ENCODE measurements at regions of chr17 and their contacts with region 1.

Region 1: GRCh38 chr17:75173526-75173925 is 9.2 kb downstream of the SUMO2 start:
- DNase-seq: no peak
- ATAC-seq: no peak
- H3K4me3 ChIP-seq: no peak overlapping the region
- H3K27ac ChIP-seq: no peak overlapping the region
- H3K4me1 ChIP-seq: no peaks in the 10 kb centered on the region
- H3K27me3 ChIP-seq: no peaks in the 10 kb centered on the region
- CTCF ChIP-seq: no peak
- EP300 ChIP-seq: no peak
- POLR2A ChIP-seq: no peak
- RAD21 ChIP-seq: no peak

Region 2: GRCh38 chr17:75059369-75060345 is 113.9 kb before region 1 on chr17:
- CTCF ChIA-PET with region 1: interaction called, 10 read pairs
- POLR2A ChIA-PET with region 1: no interaction called
- RAD21 ChIA-PET with region 1: interaction called, 7 read pairs
- SMC1A ChIA-PET with region 1: interaction called, 3 read pairs
- in situ Hi-C with region 1: no loop called
- intact Hi-C with region 1: no loop called
- DNase-seq: no peak
- ATAC-seq: no peak
- H3K4me3 ChIP-seq: no peak overlapping the region
- H3K27ac ChIP-seq: no peak overlapping the region
- H3K4me1 ChIP-seq: no peaks in the 10 kb centered on the region
- H3K27me3 ChIP-seq: no peaks in the 10 kb centered on the region
- CTCF ChIP-seq: peak in 2 of 3 experiments; percentile 19 to 34; a peak in 2 of 6 replicates
- EP300 ChIP-seq: no peak
- POLR2A ChIP-seq: no peak
- RAD21 ChIP-seq: peak; percentile 38; the same call in 1 of the 2 replicates

Region 3: DNA sequence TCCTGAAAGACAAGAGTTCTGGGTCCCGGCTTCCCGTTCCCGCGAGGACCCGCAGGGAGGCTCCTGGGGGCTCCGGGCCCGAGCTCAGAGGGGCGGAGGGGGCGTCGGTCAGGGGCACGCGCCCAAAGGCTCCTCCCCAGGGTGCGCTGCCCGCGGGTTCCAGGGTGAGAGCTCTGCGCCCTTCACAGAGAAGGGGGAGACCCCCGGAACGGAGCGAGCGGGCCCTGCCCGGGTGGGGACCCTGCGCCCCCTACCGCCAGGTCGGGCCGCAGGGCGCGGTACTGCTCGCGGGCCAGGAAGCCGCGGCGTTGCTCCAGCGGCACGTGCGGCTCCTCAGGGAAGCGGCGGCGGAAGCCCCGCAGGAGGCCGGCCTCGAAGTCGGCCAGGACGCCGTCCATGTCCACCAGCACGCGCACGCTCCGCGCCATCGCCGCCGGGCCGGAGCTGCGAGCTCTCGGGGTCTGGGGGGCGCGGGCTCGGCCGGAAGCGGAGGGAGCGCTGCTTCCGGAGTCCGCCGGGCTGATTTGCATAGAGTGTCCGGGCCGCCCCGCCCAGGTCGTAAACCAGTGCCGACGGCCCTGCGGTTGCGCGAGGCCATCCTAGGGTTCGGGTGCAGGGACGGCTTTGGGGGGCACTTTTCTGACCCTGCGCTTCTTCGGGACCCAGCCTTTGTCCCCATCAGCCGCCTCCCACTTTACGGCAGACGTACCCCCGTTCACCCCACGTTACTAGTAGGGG is 42.1 kb before region 1 on chr17 and contains the start of gene NT5C:
- CTCF ChIA-PET with region 1: interaction called, 12 read pairs
- POLR2A ChIA-PET with region 1: interaction called, 3 read pairs
- RAD21 ChIA-PET with region 1: interaction called, 3 read pairs
- SMC1A ChIA-PET with region 1: interaction called, 4 read pairs
- in situ Hi-C with region 1: no loop called
- intact Hi-C with region 1: no loop called
- DNase-seq: no peak
- ATAC-seq: peak; percentile 96
- H3K4me3 ChIP-seq: peak within 1 kb of the TSS; percentile 74
- H3K27ac ChIP-seq: peak within 1 kb of the TSS; percentile 82
- H3K4me1 ChIP-seq: peaks cover 14% of the 10 kb centered on the region
- H3K27me3 ChIP-seq: no peaks in the 10 kb centered on the region
- CTCF ChIP-seq: peak; percentile 72 to 74 (median 74); a peak in 5 of 6 replicates
- EP300 ChIP-seq: no peak; a peak in 1 of 4 replicates
- POLR2A ChIP-seq: peak; percentile 96
- RAD21 ChIP-seq: peak; percentile 34; the same call in 1 of the 2 replicates
- polyA plus RNA-seq, gene NT5C: 3.7 to 9.8 TPM

Region 4: DNA sequence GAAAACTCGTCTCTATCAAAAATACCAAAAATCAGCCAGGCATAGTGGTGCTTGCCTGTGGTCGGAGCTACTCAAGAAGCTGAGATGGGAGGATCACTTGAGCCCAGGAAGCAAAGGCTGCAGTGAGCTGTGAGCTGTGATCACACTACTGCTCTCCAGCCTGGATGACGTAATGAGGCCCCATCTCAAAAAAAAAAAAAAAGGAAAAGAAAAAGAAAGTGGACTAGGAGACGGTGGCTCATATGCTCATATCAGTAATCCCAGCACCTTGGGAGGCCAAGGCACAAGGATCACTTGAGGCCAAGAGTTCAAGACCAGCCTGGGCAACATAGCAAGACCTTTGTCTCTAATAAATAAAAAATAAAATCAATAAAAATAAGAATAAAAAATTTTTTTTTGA is 18.1 kb after region 1 on chr17:
- CTCF ChIA-PET with region 1: interaction called, 15 read pairs
- POLR2A ChIA-PET with region 1: interaction called, 3 read pairs
- RAD21 ChIA-PET with region 1: interaction called, 3 read pairs
- SMC1A ChIA-PET with region 1: interaction called, 4 read pairs
- in situ Hi-C with region 1: no loop called
- intact Hi-C with region 1: no loop called
- DNase-seq: no peak
- ATAC-seq: no peak
- H3K4me3 ChIP-seq: no peak overlapping the region
- H3K27ac ChIP-seq: no peak overlapping the region
- H3K4me1 ChIP-seq: peaks cover 6% of the 10 kb centered on the region; the same call in 1 of the 2 replicates
- H3K27me3 ChIP-seq: no peaks in the 10 kb centered on the region
- CTCF ChIP-seq: no peak
- EP300 ChIP-seq: no peak
- POLR2A ChIP-seq: no peak
- RAD21 ChIP-seq: no peak

Measured in GM12878 (cell line).